Posterior vena cava (tissue), 2 donors: ENCODE measurements at regions of chr21 and their contacts with region 1.

Region 1: DNA sequence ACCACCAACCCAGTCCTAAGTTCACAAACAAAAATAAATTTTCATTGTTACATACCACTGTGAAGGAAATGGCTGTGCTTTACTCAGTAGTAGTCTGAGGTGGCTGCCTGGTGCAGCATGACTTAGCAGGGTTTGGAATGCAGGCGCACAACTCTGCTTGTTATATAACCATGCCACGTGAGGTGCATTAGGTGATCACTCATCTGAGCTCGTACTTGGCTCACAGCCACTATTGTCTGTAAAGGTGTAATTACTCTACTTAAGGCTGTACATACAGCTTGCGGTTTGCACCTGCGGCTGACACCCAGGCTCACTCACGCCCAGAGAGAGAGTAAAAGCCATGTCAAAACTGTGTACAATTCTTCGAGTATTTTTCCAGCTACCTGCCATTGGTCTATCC is 599.4 kb downstream of the LTN1 start:
- DNase-seq: no peak

Region 2: DNA sequence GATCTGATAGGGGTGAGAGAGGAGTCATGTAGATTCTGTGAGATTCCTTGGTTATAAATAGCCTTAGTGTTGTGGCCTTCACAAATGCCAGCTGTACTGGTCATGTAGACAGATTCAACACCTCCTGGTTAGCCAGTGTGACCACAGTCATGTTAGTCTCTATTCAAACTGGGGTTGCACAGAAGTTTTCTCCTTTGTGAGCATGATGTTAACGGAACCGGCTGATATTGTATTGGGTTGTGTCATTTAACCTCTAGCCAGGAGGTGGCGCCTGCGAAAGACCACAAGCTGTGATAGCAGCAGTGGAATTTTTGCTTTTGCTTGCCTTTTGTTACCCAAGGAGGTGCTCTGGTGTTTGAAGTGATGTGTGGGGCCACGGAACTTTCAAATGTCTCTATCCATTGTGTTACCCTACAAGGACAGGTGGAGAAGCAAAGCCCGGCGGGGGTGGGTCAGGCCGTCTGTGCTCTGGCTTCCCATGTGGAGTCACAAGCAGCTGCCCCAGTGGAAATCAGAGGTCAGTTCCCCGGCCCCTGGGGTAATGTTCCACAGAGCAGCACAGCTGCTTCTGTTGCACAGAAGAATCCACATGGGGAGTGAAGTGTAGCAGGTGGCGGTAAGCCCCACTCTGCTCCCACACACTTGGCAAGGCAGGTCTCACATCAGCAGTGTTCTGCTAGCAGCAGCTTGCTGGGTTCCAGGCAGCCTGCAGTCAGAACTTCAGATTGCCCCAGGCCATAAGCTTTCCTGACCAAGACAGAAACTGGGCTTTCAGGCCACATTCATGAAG is 1660.7 kb before region 1 on chr21:
- intact Hi-C with region 1: loop called in 1 of 2 experiments (anchors 10 kb)
- DNase-seq: no peak